ENCODE measurements at regions of chr6 and their contacts with region 1.

Region 1: DNA sequence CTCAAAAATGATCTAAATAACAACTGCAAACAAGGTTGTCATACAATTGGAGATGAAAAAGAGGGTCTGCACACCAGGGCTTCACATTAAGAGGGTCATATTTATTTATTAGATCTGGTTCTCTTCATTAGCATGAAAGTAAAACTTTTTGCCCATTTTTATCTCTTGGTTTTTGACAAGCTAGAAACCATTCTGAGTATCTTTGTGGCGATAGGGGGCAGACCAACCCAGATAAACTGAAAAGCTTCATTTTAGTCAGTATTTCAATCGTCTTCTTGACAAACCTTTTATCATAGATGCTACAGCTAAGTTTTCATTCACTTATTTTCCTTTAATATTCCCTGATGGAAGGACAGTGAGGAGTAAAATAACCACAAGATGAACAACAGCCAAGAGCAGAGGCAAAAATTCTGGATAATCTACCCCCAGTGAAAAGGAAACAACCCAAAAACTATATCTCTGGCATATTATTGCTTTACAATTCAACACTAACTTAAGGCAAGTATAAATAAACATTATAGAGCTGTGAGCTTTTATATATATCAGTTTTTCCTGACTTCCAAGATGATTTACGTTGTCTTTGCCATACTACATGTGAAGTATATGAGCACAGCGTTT is 45.2 kb downstream of the THEMIS start:
- DNase-seq: peak in 33 of 35 experiments; percentile 8 to 75 (median 47)
- ATAC-seq: peak; percentile 61 to 78 (median 64)
- H3K4me3 ChIP-seq: no peak overlapping the region
- H3K4me3 Mint-ChIP-seq: peak overlapping the region in 1 of 3 donors; percentile 4
- H3K27ac ChIP-seq: peak overlapping the region; percentile 52
- H3K27ac Mint-ChIP-seq: peak overlapping the region; percentile 70 to 85
- H3K4me1 ChIP-seq: peaks cover 6 to 43% of the 10 kb centered on the region in 2 experiments
- H3K4me1 Mint-ChIP-seq: peaks cover 79 to 89% (median 82%) of the 10 kb centered on the region in 3 donors
- H3K27me3 ChIP-seq: no peaks in the 10 kb centered on the region
- H3K27me3 Mint-ChIP-seq: no peaks in the 10 kb centered on the region

Region 2: GRCh38 chr6:127630800-127631199 is 224.9 kb before region 1 on chr6:
- CTCF ChIA-PET with region 1: no interaction called
- POLR2A ChIA-PET with region 1: no interaction called
- DNase-seq: no peak
- ATAC-seq: no peak
- H3K4me3 ChIP-seq: no peak overlapping the region
- H3K4me3 Mint-ChIP-seq: no peak overlapping the region
- H3K27ac ChIP-seq: no peak overlapping the region
- H3K27ac Mint-ChIP-seq: no peak overlapping the region
- H3K4me1 ChIP-seq: no peaks in the 10 kb centered on the region
- H3K4me1 Mint-ChIP-seq: no peaks in the 10 kb centered on the region
- H3K27me3 ChIP-seq: no peaks in the 10 kb centered on the region
- H3K27me3 Mint-ChIP-seq: no peaks in the 10 kb centered on the region

Region 3: GRCh38 chr6:127725821-127726220 is 129.8 kb before region 1 on chr6:
- CTCF ChIA-PET with region 1: no interaction called
- POLR2A ChIA-PET with region 1: no interaction called
- DNase-seq: no peak
- ATAC-seq: no peak
- H3K4me3 ChIP-seq: no peak overlapping the region
- H3K4me3 Mint-ChIP-seq: no peak overlapping the region
- H3K27ac ChIP-seq: no peak overlapping the region
- H3K27ac Mint-ChIP-seq: peak overlapping the region in 1 of 2 donors; percentile 62
- H3K4me1 ChIP-seq: peaks cover 0 to 3% of the 10 kb centered on the region in 2 experiments
- H3K4me1 Mint-ChIP-seq: peaks cover 69 to 77% (median 72%) of the 10 kb centered on the region in 3 donors
- H3K27me3 ChIP-seq: no peaks in the 10 kb centered on the region
- H3K27me3 Mint-ChIP-seq: no peaks in the 10 kb centered on the region

Region 4: DNA sequence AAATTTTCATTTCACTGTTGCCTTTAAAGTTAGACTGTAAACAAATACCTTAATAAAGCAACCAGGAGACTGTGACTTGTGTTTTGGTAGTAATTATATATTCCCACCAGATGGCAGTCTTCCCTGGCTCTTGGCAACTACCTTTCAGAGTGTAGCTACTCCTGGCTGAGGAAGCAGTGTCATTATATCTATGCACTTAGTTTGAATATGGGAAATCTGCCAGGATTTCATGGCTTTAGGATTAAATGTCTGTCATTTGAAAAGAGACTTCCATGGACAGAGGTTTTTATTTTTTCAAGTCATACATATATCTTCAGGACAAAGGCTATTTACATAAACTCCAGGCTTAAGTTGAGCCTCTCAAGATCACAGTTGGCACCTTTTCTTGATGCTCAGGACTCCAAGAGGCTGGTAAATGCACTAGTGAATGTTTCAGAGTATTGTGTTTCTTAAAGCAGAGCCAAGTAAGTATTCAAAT is 118.6 kb before region 1 on chr6:
- CTCF ChIA-PET with region 1: interaction called, 7 to 31 read pairs
- POLR2A ChIA-PET with region 1: interaction called in 1 of 2 experiments, 3 read pairs
- DNase-seq: peak in 30 of 35 experiments; percentile 3 to 83 (median 24)
- ATAC-seq: peak; percentile 82 to 92 (median 84)
- H3K4me3 ChIP-seq: no peak overlapping the region
- H3K4me3 Mint-ChIP-seq: no peak overlapping the region
- H3K27ac ChIP-seq: peak overlapping the region; percentile 2
- H3K27ac Mint-ChIP-seq: peak overlapping the region; percentile 66 to 75
- H3K4me1 ChIP-seq: peaks cover 0 to 12% of the 10 kb centered on the region in 2 experiments
- H3K4me1 Mint-ChIP-seq: peaks cover 59 to 67% (median 59%) of the 10 kb centered on the region in 3 donors
- H3K27me3 ChIP-seq: no peaks in the 10 kb centered on the region
- H3K27me3 Mint-ChIP-seq: no peaks in the 10 kb centered on the region

Region 5: GRCh38 chr6:127868338-127868737 is 12.7 kb after region 1 on chr6:
- CTCF ChIA-PET with region 1: interaction called, 5 to 19 read pairs
- POLR2A ChIA-PET with region 1: interaction called, 3 to 4 read pairs
- DNase-seq: no peak
- ATAC-seq: no peak
- H3K4me3 ChIP-seq: no peak overlapping the region
- H3K4me3 Mint-ChIP-seq: no peak overlapping the region
- H3K27ac ChIP-seq: no peak overlapping the region
- H3K27ac Mint-ChIP-seq: peak overlapping the region in 1 of 2 donors; percentile 66
- H3K4me1 ChIP-seq: peaks cover 14 to 23% of the 10 kb centered on the region in 2 experiments
- H3K4me1 Mint-ChIP-seq: peaks cover 72 to 75% (median 74%) of the 10 kb centered on the region in 3 donors
- H3K27me3 ChIP-seq: no peaks in the 10 kb centered on the region
- H3K27me3 Mint-ChIP-seq: no peaks in the 10 kb centered on the region

Region 6: DNA sequence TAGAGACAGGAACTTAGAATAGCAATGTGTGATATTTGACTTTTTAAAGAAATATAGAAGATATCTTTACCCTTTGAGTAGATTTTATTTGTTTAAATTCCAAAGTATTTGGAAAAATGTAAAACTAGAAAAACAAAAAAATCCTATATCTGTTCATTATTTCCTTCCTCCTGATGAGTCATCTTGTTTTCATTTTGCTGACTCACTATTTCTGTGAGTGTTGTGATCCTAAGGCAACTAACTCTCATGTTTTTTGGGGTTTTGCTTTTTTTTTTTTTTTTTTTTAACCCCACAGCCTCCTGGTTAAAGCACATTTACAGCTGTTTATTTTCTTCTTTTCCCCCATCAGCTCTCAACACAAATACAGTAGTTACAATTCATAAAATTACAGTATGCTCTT is 83.0 kb after region 1 on chr6:
- CTCF ChIA-PET with region 1: interaction called in 1 of 2 experiments, 17 read pairs
- POLR2A ChIA-PET with region 1: no interaction called
- DNase-seq: peak in 1 of 35 experiments; percentile 37
- ATAC-seq: no peak
- H3K4me3 ChIP-seq: no peak overlapping the region
- H3K4me3 Mint-ChIP-seq: no peak overlapping the region
- H3K27ac ChIP-seq: no peak overlapping the region
- H3K27ac Mint-ChIP-seq: peak overlapping the region; percentile 11 to 45
- H3K4me1 ChIP-seq: peaks cover 11 to 15% of the 10 kb centered on the region in 2 experiments
- H3K4me1 Mint-ChIP-seq: peaks cover 51 to 67% (median 58%) of the 10 kb centered on the region in 3 donors
- H3K27me3 ChIP-seq: no peaks in the 10 kb centered on the region
- H3K27me3 Mint-ChIP-seq: no peaks in the 10 kb centered on the region

Region 7: GRCh38 chr6:127990074-127990473 is 134.4 kb after region 1 on chr6:
- CTCF ChIA-PET with region 1: interaction called, 4 to 11 read pairs
- POLR2A ChIA-PET with region 1: interaction called in 1 of 2 experiments, 4 read pairs
- DNase-seq: no peak
- ATAC-seq: no peak
- H3K4me3 ChIP-seq: no peak overlapping the region
- H3K4me3 Mint-ChIP-seq: no peak overlapping the region
- H3K27ac ChIP-seq: no peak overlapping the region
- H3K27ac Mint-ChIP-seq: peak overlapping the region; percentile 40 to 48
- H3K4me1 ChIP-seq: no peaks in the 10 kb centered on the region
- H3K4me1 Mint-ChIP-seq: peaks cover 9 to 22% (median 14%) of the 10 kb centered on the region in 3 donors
- H3K27me3 ChIP-seq: no peaks in the 10 kb centered on the region
- H3K27me3 Mint-ChIP-seq: no peaks in the 10 kb centered on the region

Measured in T-cell (primary cell).